Calu3 (cell line): ENCODE measurements at regions of chr3 and their contacts with region 1.

Region 1: GRCh38 chr3:69084326-69085167 is at the start of gene ARL6IP5:
- DNase-seq: peak; percentile 88
- H3K4me3 Mint-ChIP-seq: peak within 1 kb of the TSS; percentile 82
- H3K27ac Mint-ChIP-seq: peak within 1 kb of the TSS; percentile 93
- H3K4me1 Mint-ChIP-seq: peaks cover 38% of the 10 kb centered on the region
- H3K27me3 Mint-ChIP-seq: no peaks in the 10 kb centered on the region
- CTCF ChIP-seq: no peak
- total RNA-seq, gene ARL6IP5: 65.5 and 76.9 TPM in 2 replicates

Region 2: DNA sequence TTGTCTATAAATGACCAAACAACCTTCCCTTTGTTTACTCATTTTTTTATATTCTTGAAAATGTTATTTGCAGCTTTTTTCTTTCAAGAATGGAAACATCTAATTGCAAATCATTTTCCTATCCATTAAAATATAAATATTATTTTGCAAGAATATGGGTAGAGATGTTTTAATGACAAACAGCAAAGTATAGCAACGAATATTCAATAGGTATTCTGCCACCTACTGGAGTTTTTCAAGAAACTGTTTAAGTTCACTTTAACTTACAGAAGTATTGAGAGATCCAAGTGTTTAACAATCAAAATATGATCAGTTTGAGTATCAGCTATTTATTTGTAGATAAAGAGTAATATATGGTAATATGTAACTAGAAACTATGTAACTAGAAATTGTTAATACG is 64.1 kb before region 1 on chr3:
- CTCF ChIA-PET with region 1: interaction called, 13 read pairs
- intact Hi-C with region 1: no loop called
- DNase-seq: no peak
- H3K4me3 Mint-ChIP-seq: no peak overlapping the region
- H3K27ac Mint-ChIP-seq: no peak overlapping the region
- H3K4me1 Mint-ChIP-seq: peaks cover 13% of the 10 kb centered on the region
- H3K27me3 Mint-ChIP-seq: no peaks in the 10 kb centered on the region
- CTCF ChIP-seq: no peak

Region 3: DNA sequence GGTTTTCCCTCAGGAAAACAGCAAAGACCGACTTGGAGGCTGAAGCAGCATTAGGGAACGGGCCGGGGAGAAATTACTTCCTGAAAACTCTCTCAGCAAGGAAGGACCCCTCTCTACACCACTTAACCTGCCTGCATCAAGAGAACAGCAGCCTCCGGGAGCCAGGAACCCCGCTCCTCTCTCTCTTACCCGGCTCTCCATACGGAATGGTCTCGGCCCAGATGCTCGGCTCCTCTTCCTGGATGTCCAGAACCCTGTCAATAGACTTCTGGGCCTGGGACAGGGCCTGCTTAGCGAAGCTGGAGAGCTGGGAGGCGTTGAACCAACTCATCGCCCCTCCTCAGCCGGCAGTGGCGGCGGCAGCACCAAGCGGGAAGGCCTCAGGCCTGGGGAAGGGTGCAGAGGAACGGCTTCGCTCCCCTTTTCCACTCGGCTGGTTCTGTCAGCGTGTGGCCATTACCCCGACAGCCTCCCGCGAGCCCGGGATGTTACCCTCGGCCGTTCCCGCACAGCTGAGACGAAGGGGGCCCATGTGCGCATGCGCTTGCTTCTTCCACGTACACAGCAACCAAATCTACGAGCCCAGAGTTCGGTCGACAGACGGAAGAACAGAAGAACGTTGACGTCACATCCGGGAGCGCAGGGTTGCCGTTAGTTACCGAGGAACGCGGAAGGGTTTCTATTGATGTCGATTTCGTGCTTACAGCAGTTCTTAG is 32.6 kb before region 1 on chr3 and contains the start of gene TMF1:
- CTCF ChIA-PET with region 1: interaction called, 3 read pairs
- intact Hi-C with region 1: loop called (anchors 2 kb)
- DNase-seq: peak; percentile 96
- H3K4me3 Mint-ChIP-seq: peak within 1 kb of the TSS; percentile 97
- H3K27ac Mint-ChIP-seq: peak within 1 kb of the TSS; percentile 98
- H3K4me1 Mint-ChIP-seq: no peaks in the 10 kb centered on the region
- H3K27me3 Mint-ChIP-seq: no peaks in the 10 kb centered on the region
- CTCF ChIP-seq: no peak
- total RNA-seq, gene TMF1: 31.3 and 34.4 TPM in 2 replicates

Region 4: DNA sequence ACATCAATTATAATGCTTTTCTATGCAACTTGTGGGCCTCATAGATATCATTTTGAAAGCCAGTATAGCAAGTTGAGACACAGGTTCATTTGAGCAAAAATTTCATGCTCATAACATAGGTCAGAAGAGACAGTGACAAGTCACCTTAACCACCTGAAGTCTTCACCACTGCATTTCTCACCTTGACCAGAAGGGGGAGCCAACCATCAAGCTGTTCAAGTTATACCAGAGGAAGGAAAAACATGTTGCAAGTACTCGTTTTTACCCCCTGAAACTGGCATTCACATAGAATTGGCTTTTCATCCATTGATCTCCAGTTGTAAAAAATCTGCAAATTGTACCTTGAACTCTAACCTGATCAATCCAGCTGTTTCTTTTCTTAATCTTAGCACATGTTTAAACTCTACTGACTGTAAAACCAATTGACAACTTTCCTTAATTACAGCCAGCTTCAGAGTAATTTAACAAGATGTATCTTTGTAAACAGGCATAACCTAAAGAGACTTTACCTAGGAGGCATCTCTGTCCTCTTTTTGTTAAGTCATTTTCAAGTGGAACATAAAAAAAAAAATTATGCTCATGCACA is 36.4 kb after region 1 on chr3:
- CTCF ChIA-PET with region 1: interaction called, 4 read pairs
- intact Hi-C with region 1: loop called (anchors 2 kb)
- DNase-seq: peak; percentile 85
- H3K4me3 Mint-ChIP-seq: no peak overlapping the region
- H3K27ac Mint-ChIP-seq: no peak overlapping the region
- H3K4me1 Mint-ChIP-seq: peaks cover 29% of the 10 kb centered on the region
- H3K27me3 Mint-ChIP-seq: no peaks in the 10 kb centered on the region
- CTCF ChIP-seq: peak; percentile 60